ENCODE measurements at regions of chr1 and their contacts with region 1.

Region 1: DNA sequence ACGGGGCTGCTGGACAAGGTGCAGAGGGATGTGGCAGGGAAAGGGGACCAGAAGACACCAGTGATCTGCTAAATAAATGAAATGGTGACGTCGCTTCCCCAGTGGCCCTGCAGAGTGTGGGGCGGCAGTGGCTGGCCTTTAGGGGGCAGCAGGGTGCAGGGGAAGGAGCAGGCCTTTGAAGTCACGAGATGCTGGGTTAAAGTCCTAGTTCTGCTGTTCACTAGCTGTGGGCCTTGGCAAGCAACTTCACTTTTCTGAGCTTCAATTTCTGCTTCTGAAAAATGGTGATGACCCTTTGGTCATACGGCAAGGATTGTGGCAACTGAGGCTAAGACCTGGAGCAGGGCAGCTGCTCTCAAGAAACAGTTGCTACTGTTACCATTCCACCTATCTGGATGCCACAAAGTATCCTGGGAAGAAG is 9.2 kb upstream of the GALE start:
- DNase-seq: peak; percentile 84
- ATAC-seq: peak; percentile 88
- H3K4me3 Mint-ChIP-seq: no peak overlapping the region
- H3K27ac Mint-ChIP-seq: no peak overlapping the region
- H3K4me1 Mint-ChIP-seq: peaks cover 17% of the 10 kb centered on the region
- H3K27me3 Mint-ChIP-seq: no peaks in the 10 kb centered on the region

Region 2: DNA sequence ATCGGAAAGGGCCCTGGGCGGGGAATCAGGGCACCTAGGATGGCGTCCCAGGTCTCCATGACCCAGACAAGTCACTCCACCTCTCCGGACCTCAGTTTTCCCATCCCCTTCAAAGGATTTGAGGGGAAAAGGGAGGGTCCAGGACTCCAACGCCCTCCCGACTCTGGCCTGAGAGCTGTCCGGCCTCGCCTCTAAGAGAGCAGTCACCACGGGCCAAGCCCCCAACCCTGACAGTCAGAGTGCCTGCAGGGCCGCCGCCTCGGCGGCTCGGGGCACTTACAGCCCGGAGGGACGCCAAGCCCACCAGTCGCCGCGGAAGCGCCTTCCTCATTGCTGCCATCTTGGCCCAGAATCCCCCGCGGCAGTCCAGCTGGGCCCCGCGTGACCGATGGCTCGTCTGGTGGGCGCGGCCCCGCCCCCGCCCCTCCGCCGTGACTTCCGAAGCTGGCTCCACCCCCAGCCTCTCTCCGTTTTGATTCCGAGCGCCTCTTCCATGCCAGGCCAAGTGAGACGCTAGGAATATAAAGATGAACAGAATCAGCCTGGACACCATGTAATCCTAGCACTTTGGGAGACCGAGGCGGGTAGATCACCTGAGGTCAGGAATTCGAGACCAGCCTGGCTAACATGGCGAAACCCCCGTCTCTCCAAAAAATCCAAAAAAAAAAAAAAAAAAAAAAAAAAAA is 15.5 kb after region 1 on chr1 and contains the start of gene HMGCL:
- POLR2A ChIA-PET with region 1: interaction called, 11 read pairs
- DNase-seq: peak; percentile 90
- ATAC-seq: peak; percentile 98
- H3K4me3 Mint-ChIP-seq: peak within 1 kb of the TSS; percentile 88
- H3K27ac Mint-ChIP-seq: peak within 1 kb of the TSS; percentile 85
- H3K4me1 Mint-ChIP-seq: peaks cover 14% of the 10 kb centered on the region
- H3K27me3 Mint-ChIP-seq: no peaks in the 10 kb centered on the region
- total RNA-seq, gene HMGCL: 35.4 to 37.2 TPM

Region 3: GRCh38 chr1:23916209-23917131 is 106.7 kb after region 1 on chr1:
- POLR2A ChIA-PET with region 1: interaction called, 18 read pairs
- DNase-seq: peak; percentile 65
- ATAC-seq: peak; percentile 95
- H3K4me3 Mint-ChIP-seq: no peak overlapping the region
- H3K27ac Mint-ChIP-seq: no peak overlapping the region
- H3K4me1 Mint-ChIP-seq: peaks cover 26% of the 10 kb centered on the region
- H3K27me3 Mint-ChIP-seq: no peaks in the 10 kb centered on the region